ENCODE measurements at regions of chr1 and their contacts with region 1.

Region 1: DNA sequence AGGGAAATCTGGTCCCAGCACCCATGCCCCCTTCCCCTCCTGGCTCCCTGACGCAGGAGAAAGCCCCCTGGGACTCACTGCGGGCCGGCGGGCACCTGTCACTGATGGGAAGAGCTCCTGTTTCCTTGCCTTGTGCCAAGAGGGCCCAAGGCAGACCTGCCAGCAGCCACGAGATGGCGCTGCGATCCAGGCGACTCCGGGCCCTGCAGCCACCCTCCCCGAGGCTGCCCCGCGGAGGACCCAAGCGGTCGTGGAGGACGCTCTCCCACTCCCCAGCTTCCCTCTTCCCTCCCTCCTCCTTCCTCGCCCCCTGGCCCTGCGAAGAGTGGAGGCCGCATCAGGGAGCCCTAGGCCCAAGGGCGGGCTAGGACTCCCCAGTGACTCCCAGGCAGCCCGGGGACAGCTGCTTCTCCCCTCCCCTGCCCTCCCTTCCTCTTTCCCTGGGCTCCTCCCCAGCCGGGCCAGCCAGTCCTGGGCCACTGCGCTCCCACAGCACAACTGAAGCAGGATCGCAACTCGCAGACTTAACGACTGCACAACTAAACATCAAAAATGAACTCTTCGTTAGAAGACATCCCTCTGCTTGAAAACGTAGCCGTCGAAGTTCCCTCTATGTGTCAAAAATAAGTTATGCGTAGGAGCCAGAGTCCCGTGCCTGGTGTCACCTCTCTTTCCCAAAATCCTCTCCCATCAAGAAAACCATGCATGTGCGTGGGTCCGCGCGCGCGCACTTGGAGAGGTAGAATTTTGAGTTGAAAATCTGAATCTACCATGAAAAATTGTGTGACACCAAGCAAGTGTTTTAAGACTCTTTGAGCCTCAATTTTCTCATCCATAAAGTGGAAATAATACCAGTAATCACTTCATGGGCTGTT is 34.2 kb downstream of the BATF3 start:
- DNase-seq: peak; percentile 84
- ATAC-seq: peak; percentile 93
- H3K4me3 Mint-ChIP-seq: peak overlapping the region; percentile 59
- H3K27ac Mint-ChIP-seq: peak overlapping the region; percentile 63
- H3K4me1 Mint-ChIP-seq: peaks cover 16% of the 10 kb centered on the region
- H3K27me3 Mint-ChIP-seq: peaks cover 8% of the 10 kb centered on the region
- CTCF ChIP-seq: peak; percentile 95

Region 2: DNA sequence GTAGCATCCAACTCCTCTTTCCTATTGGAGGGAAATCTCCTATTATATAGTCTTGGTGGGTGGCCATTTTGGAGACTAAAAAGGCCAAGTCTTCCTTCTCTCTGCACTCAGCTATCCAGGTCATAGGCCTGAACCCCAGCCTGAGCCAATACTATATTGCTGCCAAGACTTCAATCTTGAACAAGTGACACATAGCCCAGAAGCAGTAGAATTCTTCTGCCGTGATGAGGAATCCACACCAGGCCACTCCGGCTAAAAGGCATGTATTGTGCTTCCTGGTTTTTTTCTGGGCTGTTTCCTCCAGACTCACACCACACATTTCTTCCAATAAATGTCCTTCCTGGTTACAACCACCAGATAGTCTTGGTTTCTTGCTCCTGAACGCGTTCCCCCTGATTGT is 14.0 kb before region 1 on chr1:
- CTCF ChIA-PET with region 1: interaction called, 32 read pairs
- POLR2A ChIA-PET with region 1: interaction called, 4 read pairs
- intact Hi-C with region 1: no loop called
- DNase-seq: no peak
- ATAC-seq: no peak
- H3K4me3 Mint-ChIP-seq: no peak overlapping the region
- H3K27ac Mint-ChIP-seq: no peak overlapping the region
- H3K4me1 Mint-ChIP-seq: no peaks in the 10 kb centered on the region
- H3K27me3 Mint-ChIP-seq: peaks cover 6% of the 10 kb centered on the region
- CTCF ChIP-seq: no peak

Region 3: DNA sequence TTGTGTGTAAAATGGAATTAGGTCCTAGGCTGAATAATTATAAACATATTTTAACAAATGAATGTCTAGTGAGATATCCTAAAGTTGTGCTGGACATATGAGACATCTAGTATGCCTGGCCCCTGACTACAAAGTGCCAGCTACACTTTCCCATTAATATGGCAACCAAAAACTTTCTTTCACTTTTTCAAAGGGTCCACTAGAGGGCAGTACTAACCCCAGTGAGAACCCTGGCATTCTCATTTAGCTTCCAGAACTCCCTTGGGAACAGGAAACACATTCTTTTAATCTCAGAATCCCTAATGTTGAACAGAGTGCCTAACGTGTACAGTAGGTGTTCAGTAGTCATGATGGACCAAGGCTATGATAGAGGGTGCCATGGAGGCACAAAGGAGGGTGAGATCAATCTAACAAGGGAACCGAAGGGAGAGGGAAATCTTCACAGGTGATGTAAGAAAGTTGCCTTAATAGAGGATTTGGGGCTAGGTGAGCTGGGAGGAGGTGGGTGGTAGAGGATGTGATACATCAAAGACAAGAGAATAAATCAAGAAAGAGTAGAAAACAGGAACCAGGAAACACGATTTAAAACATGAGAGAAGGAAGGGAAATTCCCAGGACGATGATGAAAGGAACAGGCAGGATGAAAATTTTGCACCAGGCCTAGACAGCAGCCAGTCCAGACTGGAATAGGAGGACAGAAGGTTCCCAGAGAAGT is 84.5 kb after region 1 on chr1:
- CTCF ChIA-PET with region 1: interaction called, 35 read pairs
- POLR2A ChIA-PET with region 1: no interaction called
- intact Hi-C with region 1: no loop called
- DNase-seq: no peak
- ATAC-seq: peak; percentile 35
- H3K4me3 Mint-ChIP-seq: peak overlapping the region; percentile 18
- H3K27ac Mint-ChIP-seq: peak overlapping the region; percentile 74
- H3K4me1 Mint-ChIP-seq: peaks cover 53% of the 10 kb centered on the region
- H3K27me3 Mint-ChIP-seq: no peaks in the 10 kb centered on the region
- CTCF ChIP-seq: peak; percentile 70

Region 4: DNA sequence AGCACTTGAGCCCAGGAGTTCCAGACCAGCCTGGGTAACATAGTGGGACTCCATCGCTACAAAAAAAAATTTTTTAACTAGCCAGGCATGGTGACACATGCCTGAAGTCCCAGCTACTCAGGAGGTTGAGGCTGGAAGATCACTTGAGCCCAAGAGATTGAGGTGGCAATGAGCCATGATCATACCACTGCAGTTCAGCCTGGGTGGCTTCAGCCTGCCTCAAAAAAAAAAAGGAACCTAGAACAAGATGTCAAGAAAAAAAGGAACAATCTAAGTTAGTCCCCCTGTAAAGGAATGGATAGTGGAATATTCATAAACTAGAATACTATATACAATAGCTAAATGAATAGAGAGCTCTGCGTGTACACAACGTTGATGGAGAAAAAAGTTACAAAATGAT is 111.7 kb after region 1 on chr1:
- CTCF ChIA-PET with region 1: interaction called, 118 read pairs
- POLR2A ChIA-PET with region 1: interaction called, 4 read pairs
- intact Hi-C with region 1: loop called (anchors 2 kb)
- DNase-seq: no peak
- ATAC-seq: no peak
- H3K4me3 Mint-ChIP-seq: no peak overlapping the region
- H3K27ac Mint-ChIP-seq: no peak overlapping the region
- H3K4me1 Mint-ChIP-seq: peaks cover 29% of the 10 kb centered on the region
- H3K27me3 Mint-ChIP-seq: no peaks in the 10 kb centered on the region
- CTCF ChIP-seq: no peak

Region 5: GRCh38 chr1:212797681-212798080 is 132.2 kb after region 1 on chr1:
- CTCF ChIA-PET with region 1: interaction called, 11 read pairs
- POLR2A ChIA-PET with region 1: interaction called, 7 read pairs
- intact Hi-C with region 1: no loop called
- DNase-seq: no peak
- ATAC-seq: no peak
- H3K4me3 Mint-ChIP-seq: no peak overlapping the region
- H3K27ac Mint-ChIP-seq: no peak overlapping the region
- H3K4me1 Mint-ChIP-seq: peaks cover 15% of the 10 kb centered on the region
- H3K27me3 Mint-ChIP-seq: no peaks in the 10 kb centered on the region
- CTCF ChIP-seq: no peak